ENCODE measurements at regions of chr11 and their contacts with region 1.

Region 1: DNA sequence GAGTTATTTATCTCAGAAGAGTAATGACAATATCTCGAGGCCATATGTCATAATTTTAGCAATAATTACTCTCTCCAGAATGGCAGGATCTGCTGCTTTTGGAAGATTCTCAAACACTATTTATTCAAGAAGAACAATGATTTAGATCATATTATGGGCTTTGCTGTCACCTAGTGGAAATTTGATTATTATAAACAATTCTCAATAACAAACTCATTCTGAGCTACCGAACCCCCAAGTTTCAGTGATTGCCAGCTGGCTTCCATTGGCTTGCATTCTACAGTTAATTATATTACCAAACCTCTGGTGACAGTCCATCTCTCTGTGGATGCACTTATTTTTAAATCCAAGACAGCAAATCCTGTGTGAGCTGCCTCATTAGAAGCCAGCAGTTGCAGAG is 27.9 kb upstream of the SLC36A4 start:
- DNase-seq: no peak
- ATAC-seq: no peak
- H3K4me3 Mint-ChIP-seq: no peak overlapping the region
- H3K27ac Mint-ChIP-seq: no peak overlapping the region
- H3K4me1 Mint-ChIP-seq: no peaks in the 10 kb centered on the region
- H3K27me3 Mint-ChIP-seq: peaks cover 4% of the 10 kb centered on the region

Region 2: DNA sequence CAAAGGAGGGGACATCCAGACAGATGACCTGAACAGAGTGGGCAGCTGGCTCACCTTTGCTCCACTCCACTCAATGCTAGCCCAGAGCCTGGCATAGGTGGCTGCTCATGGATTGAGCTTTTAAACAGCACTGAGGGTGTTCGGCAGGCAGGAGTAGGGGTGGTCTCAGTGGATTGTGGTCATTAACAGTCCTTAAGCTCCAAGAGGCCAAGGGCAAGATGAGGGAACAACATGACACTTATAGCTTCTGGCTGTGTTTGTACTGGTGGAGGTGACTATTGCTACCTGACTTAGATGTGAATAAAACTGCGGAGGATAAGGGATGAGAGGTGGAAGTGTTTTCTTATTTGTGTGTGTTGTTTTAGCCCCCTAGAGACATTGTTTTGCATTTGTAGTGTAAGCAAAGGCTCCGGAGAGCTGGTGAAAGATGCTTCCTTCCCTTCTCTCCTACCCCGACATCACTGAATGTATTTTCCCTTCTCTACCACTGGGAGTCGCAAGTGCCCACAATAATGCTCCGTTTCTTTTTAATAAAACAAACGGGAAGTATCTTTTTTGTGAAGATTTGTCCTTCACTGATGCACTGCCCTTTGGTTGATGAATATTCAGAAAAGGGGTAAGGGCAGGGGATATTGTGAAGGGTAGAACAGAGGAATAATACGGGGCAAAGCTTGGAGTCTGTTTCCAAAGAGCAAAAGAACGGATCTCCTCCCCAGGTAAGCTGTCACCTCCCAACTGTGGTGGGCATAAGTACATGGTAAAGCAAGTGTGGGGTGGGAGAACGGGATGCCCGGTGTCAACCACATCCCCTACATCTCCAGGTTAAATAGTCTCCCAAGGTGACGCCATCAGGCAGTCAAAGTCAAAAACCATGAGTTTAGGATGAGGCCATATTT is 283.7 kb before region 1 on chr11:
- CTCF ChIA-PET with region 1: interaction called, 15 read pairs
- DNase-seq: no peak
- ATAC-seq: no peak
- H3K4me3 Mint-ChIP-seq: no peak overlapping the region
- H3K27ac Mint-ChIP-seq: no peak overlapping the region
- H3K4me1 Mint-ChIP-seq: no peaks in the 10 kb centered on the region
- H3K27me3 Mint-ChIP-seq: no peaks in the 10 kb centered on the region

Region 3: GRCh38 chr11:93155738-93156137 is 69.9 kb before region 1 on chr11:
- CTCF ChIA-PET with region 1: no interaction called
- DNase-seq: no peak
- ATAC-seq: no peak
- H3K4me3 Mint-ChIP-seq: no peak overlapping the region
- H3K27ac Mint-ChIP-seq: no peak overlapping the region
- H3K4me1 Mint-ChIP-seq: no peaks in the 10 kb centered on the region
- H3K27me3 Mint-ChIP-seq: no peaks in the 10 kb centered on the region

Region 4: DNA sequence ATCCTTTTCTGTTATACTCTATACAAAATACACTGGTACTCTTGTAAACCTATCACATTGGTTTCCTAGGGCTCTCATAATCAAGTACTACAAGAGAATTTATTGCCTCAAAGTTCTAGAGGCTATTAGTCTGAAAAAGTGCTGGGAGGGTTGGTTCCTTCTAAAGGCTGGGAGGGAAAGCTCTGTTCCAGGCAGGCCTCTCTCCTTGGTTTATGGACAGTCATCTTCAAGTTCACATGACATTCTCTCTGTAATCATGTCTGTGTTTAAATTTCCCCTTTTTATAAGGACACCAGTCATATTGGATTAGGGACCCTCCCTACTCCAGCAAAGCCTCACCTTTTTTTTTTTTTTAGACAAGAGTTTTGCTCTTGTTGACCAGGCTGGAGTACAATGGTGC is 36.9 kb before region 1 on chr11:
- CTCF ChIA-PET with region 1: no interaction called
- DNase-seq: no peak
- ATAC-seq: no peak
- H3K4me3 Mint-ChIP-seq: no peak overlapping the region
- H3K27ac Mint-ChIP-seq: no peak overlapping the region
- H3K4me1 Mint-ChIP-seq: no peaks in the 10 kb centered on the region
- H3K27me3 Mint-ChIP-seq: no peaks in the 10 kb centered on the region

Measured in activated CD8-positive, alpha-beta memory T cell treated with anti-CD3 and anti-CD28 coated beads, Interleukin-2, amount 10 ng/mL, durations not matched to agents 7 days and 5 days (primary cell).